ENCODE measurements at regions of chr13 and their contacts with region 1.

Region 1: DNA sequence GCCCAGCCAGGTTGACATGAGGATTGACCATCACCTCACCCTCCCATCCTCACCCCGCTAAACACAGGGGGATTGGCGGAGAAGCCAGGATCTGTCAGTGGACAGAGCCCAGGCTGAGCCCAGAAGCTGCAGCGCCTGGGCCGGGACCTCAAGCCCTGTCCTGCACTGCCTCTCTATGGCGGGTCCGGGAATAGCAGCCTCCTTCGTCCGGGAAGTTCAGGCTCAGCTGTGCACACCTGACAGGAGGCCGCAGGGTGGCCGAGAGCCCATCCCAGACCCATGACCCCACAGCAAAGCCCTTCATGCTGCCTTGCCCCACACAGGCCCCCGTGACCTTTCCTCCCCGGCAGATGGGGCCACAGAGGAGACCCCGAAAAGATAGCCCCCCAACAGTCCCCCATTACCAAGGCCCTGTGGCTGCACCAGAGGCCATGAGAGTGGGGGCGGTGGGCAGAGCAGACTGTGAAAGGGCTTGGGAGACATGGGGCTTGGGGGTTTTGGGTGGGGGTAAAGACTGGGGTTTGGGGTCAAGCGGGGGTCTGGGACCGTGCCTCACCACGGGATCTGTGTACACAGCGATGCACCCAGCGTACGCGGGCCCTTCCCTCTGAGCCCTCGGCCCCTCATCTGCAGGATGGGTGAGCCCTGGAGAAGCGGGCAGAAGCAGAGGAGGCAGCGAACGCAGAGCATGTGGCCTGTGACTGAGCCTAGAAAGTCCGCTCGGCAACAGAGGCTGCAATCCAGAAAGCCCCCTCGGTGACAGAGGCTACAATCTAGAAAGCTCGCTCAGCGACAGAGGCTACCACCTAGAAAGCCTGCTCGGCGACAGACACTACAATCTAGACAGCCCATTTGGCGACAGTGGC is 68.1 kb downstream of the SPACA7 start:
- DNase-seq: peak in 1 of 2 donors; percentile 85
- ATAC-seq: peak; percentile 60
- H3K4me3 ChIP-seq: no peak overlapping the region
- H3K27ac ChIP-seq: no peak overlapping the region
- H3K4me1 ChIP-seq: no peaks in the 10 kb centered on the region
- H3K27me3 ChIP-seq: no peaks in the 10 kb centered on the region

Region 2: DNA sequence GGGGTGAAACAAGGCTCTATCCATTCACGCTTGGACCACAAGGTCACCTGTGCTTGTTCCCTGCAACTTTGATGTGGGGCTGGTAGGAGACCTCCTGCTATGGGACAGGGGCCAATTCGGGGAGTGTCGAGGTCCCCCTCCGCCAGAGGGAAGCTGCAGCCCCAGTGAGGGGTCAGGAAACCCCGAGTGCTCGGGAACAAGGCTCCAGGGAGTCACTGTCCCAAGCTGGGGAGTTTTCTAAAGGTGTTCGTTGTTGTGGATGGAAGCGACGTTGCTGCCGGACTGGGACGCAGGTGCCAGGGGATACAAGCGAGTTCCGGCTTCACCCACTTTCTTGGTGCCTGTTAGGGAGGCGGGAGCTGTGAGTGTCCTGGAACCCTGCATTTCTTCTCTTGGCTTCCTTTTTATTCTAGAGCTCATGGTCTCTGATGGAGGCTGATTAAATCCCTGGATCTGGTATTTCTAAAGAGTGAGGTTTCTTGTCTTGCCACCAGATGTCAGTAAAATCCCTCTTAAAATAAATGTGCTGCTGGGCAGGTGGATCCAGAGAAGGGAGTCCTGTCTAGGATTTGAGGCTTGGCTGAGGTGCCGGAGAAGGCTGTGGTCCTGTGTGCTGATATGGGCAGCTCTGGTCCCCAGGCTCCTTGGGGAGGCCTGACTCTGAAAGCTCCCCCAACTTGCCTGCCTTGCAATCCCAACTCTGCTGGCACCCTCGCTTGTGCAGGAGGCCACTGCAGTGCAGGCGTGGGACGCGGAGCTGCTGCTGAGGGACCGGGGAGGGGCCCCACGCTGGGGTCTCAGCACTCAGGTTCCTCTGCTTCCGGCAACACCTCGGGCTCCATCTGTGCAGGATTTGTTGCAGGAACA is 969.9 kb before region 1 on chr13:
- intact Hi-C with region 1: loop called (anchors 2 to 10 kb)
- DNase-seq: no peak
- ATAC-seq: no peak
- H3K4me3 ChIP-seq: no peak overlapping the region
- H3K27ac ChIP-seq: no peak overlapping the region
- H3K4me1 ChIP-seq: no peaks in the 10 kb centered on the region
- H3K27me3 ChIP-seq: no peaks in the 10 kb centered on the region

Measured in aorta (tissue), 5 donors.